ENCODE measurements at regions of chr18 and their contacts with region 1.

Region 1: GRCh38 chr18:54679318-54680149 is 88.5 kb downstream of the DYNAP start:
- DNase-seq: peak; percentile 22 to 72
- H3K4me3 ChIP-seq: no peak overlapping the region
- H3K4me1 ChIP-seq: peaks cover 6% of the 10 kb centered on the region; the same call in 1 of the 2 replicates
- H3K27me3 ChIP-seq: no peaks in the 10 kb centered on the region; the same call in 1 of the 2 replicates

Region 2: DNA sequence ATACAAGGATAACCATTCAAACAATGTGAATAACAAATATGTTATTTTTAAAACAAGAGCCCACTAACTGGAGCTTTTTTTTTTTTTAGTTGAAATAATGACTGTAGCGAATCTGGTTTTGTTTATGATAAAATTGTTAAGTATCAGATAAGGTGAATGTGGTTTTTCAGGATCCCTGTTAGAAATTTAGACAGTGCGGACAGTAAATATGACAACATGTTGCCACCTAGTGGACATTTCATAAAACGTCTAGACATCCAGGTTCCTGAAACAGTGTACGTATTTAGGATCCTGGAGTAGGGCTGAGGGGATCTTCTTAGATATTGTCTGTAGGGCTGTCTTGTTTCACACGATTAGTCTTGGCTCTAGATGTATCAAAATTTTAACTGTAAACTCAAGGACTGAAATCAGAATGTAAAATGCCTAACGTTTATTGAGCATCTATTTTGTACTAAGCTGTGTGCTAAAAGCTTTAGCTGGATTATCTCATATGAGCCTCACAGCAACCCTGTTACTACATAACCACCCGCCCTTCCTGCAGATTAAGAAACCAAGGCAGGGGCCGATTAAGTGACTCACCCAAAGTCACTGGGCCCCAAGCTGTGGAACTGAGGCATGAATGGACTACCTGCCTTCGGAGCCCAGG is 303.6 kb after region 1 on chr18:
- in situ Hi-C with region 1: loop called (anchors 5 kb)
- DNase-seq: peak; percentile 11 to 72
- H3K4me3 ChIP-seq: no peak overlapping the region
- H3K4me1 ChIP-seq: no peaks in the 10 kb centered on the region
- H3K27me3 ChIP-seq: no peaks in the 10 kb centered on the region

Region 3: GRCh38 chr18:55189972-55190371 is 510.4 kb after region 1 on chr18:
- in situ Hi-C with region 1: loop called (anchors 25 kb)
- DNase-seq: peak; percentile 71 to 73
- H3K4me3 ChIP-seq: no peak overlapping the region
- H3K4me1 ChIP-seq: peaks cover 10% of the 10 kb centered on the region
- H3K27me3 ChIP-seq: no peaks in the 10 kb centered on the region

Measured in HAP-1 (cell line).